ENCODE measurements at regions of chr20 and their contacts with region 1.

Region 1: DNA sequence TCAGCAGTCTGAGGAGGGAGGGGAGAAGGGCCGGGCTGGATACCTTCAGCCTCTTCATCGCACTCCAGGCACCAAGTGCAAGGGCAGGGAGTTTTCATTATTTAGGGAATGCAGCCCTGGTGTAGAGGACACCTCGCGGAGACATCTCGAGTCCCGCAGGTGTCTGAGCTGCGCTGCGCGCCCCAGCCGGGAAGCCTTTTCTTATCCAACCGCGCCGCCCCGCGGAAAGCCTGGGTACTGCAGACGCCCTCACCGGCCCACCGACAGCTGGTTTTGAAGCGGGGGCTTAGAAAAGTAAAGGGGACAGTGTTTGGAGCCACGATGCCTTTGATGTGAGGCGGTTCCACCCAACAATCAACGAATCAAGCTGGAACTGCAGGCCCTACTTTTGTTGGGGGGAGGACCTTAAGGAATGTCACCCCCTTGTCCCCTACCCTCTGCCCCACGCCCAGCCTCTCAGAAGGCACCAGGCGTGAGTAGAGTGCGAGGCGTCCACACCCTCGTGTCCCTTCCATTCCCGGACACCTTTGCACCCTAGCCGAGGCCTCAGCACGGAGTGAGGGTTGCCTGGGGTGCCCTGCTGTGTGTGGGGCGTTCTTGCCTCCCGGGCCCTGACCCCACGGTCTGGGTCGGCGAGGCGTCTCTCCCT is 8.6 kb downstream of the NKX2-2 start:
- DNase-seq: peak; percentile 60
- H3K4me3 ChIP-seq: no peak overlapping the region
- H3K27ac ChIP-seq: no peak overlapping the region
- H3K4me1 ChIP-seq: no peaks in the 10 kb centered on the region
- CTCF ChIP-seq: peak; percentile 96

Region 2: GRCh38 chr20:20837574-20838021 is 667.7 kb before region 1 on chr20:
- CTCF ChIA-PET with region 1: no interaction called
- POLR2A ChIA-PET with region 1: no interaction called
- intact Hi-C with region 1: loop called (anchors 5 kb)
- DNase-seq: peak; percentile 18
- H3K4me3 ChIP-seq: no peak overlapping the region
- H3K27ac ChIP-seq: no peak overlapping the region
- H3K4me1 ChIP-seq: no peaks in the 10 kb centered on the region
- CTCF ChIP-seq: peak; percentile 80

Region 3: DNA sequence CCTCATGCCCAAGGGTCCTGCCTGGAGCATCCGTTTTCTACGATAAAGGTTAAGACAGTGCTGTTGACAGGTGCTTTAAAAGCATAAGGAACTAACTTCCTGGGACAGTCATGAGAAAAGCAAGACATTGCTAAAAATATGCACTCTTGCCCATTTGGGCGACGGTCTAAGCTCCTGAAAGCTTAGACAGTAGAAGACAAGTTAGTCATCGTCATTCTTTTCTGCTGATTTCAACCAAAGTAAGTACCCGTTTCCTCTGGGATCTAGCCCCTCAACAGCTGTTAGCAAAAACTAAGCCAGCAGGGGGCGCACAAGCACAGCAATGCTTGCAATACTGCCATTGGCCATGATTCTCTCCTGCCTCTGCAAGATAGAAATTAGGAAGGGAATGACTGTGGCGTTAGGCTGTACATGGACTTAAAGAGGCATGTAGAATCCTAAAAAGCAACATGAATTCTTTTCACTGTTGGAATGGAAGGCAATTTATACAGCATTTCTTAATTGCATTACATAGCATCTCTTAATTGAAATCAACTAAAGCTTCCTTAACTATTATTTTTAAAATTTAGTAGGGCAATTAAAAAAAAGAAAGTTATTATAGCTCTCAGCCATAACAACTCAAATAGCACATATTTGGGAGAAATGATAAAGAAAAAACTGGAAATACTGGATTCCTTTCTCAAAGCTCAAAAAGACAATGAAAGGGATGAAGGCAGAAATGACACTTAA is 645.0 kb before region 1 on chr20:
- CTCF ChIA-PET with region 1: interaction called, 3 read pairs
- POLR2A ChIA-PET with region 1: no interaction called
- intact Hi-C with region 1: loop called (anchors 1 kb)
- DNase-seq: peak; percentile 82
- H3K4me3 ChIP-seq: no peak overlapping the region
- H3K27ac ChIP-seq: no peak overlapping the region
- H3K4me1 ChIP-seq: no peaks in the 10 kb centered on the region
- CTCF ChIP-seq: peak; percentile 97

Region 4: GRCh38 chr20:21048841-21049273 is 456.4 kb before region 1 on chr20:
- CTCF ChIA-PET with region 1: no interaction called
- POLR2A ChIA-PET with region 1: no interaction called
- intact Hi-C with region 1: loop called (anchors 5 kb)
- DNase-seq: peak; percentile 42
- H3K4me3 ChIP-seq: no peak overlapping the region
- H3K27ac ChIP-seq: no peak overlapping the region
- H3K4me1 ChIP-seq: no peaks in the 10 kb centered on the region
- CTCF ChIP-seq: peak; percentile 91